ENCODE measurements at regions of chr1 and their contacts with region 1.

Region 1: GRCh38 chr1:87953732-87954344 is 625.2 kb downstream of the LMO4 start:
- DNase-seq: peak; percentile 64
- ATAC-seq: peak; percentile 57
- H3K4me3 Mint-ChIP-seq: no peak overlapping the region
- H3K27ac Mint-ChIP-seq: no peak overlapping the region
- H3K4me1 Mint-ChIP-seq: no peaks in the 10 kb centered on the region
- H3K27me3 Mint-ChIP-seq: peaks cover 10% of the 10 kb centered on the region

Region 2: DNA sequence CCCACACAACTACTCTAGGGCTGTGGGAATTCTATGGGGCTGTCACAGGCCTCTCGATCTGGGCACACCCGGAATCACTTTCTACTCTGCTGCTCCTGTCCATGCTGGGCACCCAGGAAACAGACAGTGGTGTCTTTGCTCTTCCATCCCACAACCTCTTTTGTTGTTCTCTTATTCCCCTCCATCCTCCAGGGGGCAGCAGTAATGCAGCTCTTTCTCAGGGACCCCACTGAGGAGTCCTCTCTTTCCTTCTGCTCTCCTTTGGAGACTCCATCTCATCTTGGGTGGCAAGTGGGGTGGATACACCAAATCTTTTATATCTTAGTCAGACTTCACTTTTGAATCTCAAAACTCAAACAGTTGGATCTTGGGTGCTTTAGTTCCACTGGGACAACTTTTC is 833.1 kb before region 1 on chr1:
- CTCF ChIA-PET with region 1: no interaction called
- POLR2A ChIA-PET with region 1: no interaction called
- intact Hi-C with region 1: loop called in 1 of 2 experiments (anchors 10 kb)
- DNase-seq: peak; percentile 15
- ATAC-seq: no peak
- H3K4me3 Mint-ChIP-seq: no peak overlapping the region
- H3K27ac Mint-ChIP-seq: no peak overlapping the region
- H3K4me1 Mint-ChIP-seq: no peaks in the 10 kb centered on the region
- H3K27me3 Mint-ChIP-seq: no peaks in the 10 kb centered on the region

Region 3: GRCh38 chr1:87292684-87293493 is 660.9 kb before region 1 on chr1:
- CTCF ChIA-PET with region 1: interaction called, 24 read pairs
- POLR2A ChIA-PET with region 1: no interaction called
- intact Hi-C with region 1: loop called (anchors 1 kb)
- DNase-seq: peak; percentile 76
- ATAC-seq: peak; percentile 51
- H3K4me3 Mint-ChIP-seq: no peak overlapping the region
- H3K27ac Mint-ChIP-seq: no peak overlapping the region
- H3K4me1 Mint-ChIP-seq: no peaks in the 10 kb centered on the region
- H3K27me3 Mint-ChIP-seq: peaks cover 3% of the 10 kb centered on the region

Region 4: DNA sequence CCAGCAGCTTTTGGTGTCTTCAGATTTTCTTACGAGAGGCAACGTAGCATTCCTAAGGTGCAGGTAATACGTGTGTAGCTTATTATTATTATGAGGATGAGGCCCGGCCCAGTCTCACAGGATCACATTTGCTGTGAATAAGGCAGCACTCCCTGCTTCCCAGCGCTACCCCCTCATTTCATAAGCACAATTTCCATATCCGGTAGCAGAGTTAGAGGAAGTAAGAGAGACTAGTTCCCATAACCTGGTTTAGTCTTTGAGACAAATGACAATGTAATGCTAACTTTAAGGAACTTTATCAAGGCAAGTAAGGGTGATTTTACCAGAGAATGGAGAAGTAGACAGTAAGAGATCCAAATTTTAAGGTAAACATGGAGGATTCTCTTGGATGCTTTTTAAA is 639.7 kb before region 1 on chr1:
- CTCF ChIA-PET with region 1: no interaction called
- POLR2A ChIA-PET with region 1: no interaction called
- intact Hi-C with region 1: loop called in 1 of 2 experiments (anchors 5 kb)
- DNase-seq: no peak
- ATAC-seq: no peak
- H3K4me3 Mint-ChIP-seq: no peak overlapping the region
- H3K27ac Mint-ChIP-seq: no peak overlapping the region
- H3K4me1 Mint-ChIP-seq: peaks cover 3% of the 10 kb centered on the region
- H3K27me3 Mint-ChIP-seq: peaks cover 7% of the 10 kb centered on the region

Region 5: DNA sequence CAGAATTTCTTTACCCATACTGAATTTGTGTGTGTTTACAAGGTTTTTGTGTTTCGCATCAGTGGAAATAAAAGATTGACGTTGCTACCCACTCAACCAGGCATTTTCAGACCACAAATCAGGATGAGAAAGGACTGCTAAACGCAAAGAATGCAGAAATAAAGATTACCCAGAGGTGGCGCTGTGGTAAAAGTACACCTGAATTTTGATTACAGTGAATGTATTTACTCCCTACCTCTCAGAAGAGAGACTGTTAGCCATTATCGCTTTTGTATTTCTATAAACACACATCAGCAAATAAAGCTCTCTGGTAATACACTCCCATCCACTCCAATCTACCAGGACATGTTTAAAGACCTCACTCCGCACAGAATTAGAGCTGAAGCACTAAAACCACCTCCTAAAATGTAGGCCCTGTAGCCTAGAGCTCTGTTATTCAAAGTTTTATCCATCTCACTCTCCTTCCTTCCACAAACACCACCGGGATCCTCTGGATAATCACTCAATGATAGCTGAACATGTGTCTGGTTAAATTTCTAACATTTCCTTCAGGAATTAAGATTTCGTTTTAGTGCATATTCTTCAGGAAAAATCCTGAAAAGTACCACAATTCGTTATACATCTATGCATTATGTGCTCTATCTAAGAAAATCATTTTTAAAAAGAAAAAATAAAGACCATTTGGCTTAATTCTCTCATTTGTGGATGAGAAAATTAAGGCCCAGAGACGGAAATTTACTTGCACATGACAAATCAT is 627.7 kb before region 1 on chr1:
- CTCF ChIA-PET with region 1: interaction called, 10 read pairs
- POLR2A ChIA-PET with region 1: no interaction called
- intact Hi-C with region 1: loop called (anchors 1 kb)
- DNase-seq: peak; percentile 61
- ATAC-seq: no peak
- H3K4me3 Mint-ChIP-seq: no peak overlapping the region
- H3K27ac Mint-ChIP-seq: no peak overlapping the region
- H3K4me1 Mint-ChIP-seq: peaks cover 22% of the 10 kb centered on the region
- H3K27me3 Mint-ChIP-seq: peaks cover 11% of the 10 kb centered on the region